ENCODE measurements at regions of chr7 and their contacts with region 1.

Region 1: DNA sequence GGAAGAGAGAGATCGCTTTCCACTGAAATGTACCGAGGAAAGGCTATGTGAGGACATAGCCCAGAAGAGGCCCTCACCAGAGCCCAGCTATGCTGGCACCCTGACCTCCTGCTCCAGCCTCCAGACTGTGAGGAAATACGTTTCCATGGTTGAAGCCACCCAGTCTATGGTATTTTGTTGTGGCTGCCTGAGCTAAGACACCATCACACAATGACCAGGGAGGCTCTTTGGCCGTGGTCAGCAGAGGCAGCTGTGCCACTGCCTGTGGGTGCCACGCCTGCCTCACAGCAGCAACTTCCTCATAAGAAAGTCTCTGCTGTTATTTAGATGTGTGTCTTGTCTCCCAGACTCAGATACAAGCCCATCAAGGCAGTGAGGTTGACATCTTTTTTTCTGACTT is 182.7 kb upstream of the PLXNA4 start:
- DNase-seq: no peak
- H3K4me3 ChIP-seq: no peak overlapping the region
- H3K27ac ChIP-seq: no peak overlapping the region
- H3K4me1 ChIP-seq: no peaks in the 10 kb centered on the region
- H3K27me3 ChIP-seq: no peaks in the 10 kb centered on the region
- CTCF ChIP-seq: no peak
- POLR2A ChIP-seq: no peak

Region 2: DNA sequence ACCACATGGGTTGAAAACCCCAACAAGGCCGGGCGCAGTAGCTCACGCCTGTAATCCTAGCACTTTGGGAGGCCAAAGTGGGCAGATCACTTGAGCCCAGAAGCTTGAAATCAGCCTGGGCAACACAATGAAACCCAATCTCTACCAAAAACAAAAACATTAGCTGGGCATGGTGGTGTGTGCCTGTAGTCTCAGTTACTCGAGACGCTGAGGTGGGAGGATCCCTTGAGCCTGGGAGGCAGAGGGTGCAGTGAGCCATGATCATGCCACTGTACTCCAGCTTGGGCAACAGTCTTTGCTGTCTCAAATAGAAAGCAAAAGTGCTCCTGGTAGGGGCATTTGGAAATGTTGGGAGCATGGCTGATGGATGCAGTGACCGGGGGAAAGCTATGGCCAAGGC is 26.9 kb after region 1 on chr7:
- intact Hi-C with region 1: loop called (anchors 1 kb)
- DNase-seq: no peak
- H3K4me3 ChIP-seq: no peak overlapping the region
- H3K27ac ChIP-seq: no peak overlapping the region
- H3K4me1 ChIP-seq: no peaks in the 10 kb centered on the region
- H3K27me3 ChIP-seq: no peaks in the 10 kb centered on the region
- CTCF ChIP-seq: no peak
- POLR2A ChIP-seq: no peak

Measured in breast epithelium (tissue), 4 donors.